ENCODE measurements at regions of chr19 and their contacts with region 1.

Region 1: DNA sequence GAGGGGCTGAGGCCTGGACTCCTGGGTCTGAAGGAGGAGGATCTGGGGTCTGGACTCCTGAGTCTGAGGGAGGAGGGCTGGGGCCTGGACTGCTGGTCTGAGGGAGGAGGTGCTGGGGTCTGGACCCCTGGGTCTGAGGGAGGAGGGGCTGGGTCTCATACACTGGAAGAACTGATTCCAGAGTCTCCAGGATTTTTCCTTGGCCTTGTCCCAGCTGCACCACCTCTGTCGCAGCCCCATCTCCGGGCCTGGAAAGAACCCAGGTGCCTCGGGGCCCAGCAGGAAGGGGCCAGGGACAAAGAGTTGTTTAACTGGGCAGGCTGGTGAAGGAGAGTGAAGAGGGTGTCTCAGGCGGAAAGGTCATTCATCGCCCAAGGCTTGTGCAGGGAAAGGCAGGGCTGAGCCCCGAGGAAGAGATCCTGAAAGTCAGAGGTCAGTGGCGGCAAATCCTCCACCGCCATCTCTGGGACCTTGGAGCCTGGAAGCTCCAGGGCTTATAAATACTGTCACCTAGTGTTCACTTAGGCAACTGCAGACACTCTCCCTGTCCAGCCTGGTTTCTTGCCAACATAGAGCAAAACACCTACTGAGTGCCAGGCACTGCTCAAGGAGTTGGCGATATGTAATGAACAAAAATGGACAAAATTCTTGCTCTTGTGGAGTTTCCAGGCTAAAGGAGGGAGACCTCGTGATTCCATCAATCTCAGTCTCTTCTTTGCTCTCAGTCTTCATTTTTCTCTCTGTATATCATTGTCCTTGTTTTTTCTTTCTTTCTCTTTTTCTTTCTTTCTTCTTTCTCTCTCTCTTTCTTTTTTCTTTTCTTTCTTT is 4.4 kb upstream of the KCNN4 start:
- DNase-seq: peak; percentile 75
- H3K4me3 Mint-ChIP-seq: peak overlapping the region; percentile 66
- H3K27ac Mint-ChIP-seq: peak overlapping the region; percentile 95
- H3K4me1 Mint-ChIP-seq: peaks cover 39% of the 10 kb centered on the region
- H3K27me3 Mint-ChIP-seq: no peaks in the 10 kb centered on the region

Region 2: GRCh38 chr19:43463381-43464136 is 321.6 kb before region 1 on chr19:
- CTCF ChIA-PET with region 1: no interaction called
- intact Hi-C with region 1: loop called (anchors 10 kb)
- DNase-seq: peak; percentile 100
- H3K4me3 Mint-ChIP-seq: peak overlapping the region; percentile 94
- H3K27ac Mint-ChIP-seq: peak overlapping the region; percentile 86
- H3K4me1 Mint-ChIP-seq: peaks cover 37% of the 10 kb centered on the region
- H3K27me3 Mint-ChIP-seq: no peaks in the 10 kb centered on the region

Region 3: GRCh38 chr19:43575156-43575950 is 209.8 kb before region 1 on chr19 and contains the starts of genes PINLYP and XRCC1:
- CTCF ChIA-PET with region 1: no interaction called
- intact Hi-C with region 1: loop called (anchors 2 kb)
- DNase-seq: peak; percentile 99
- H3K4me3 Mint-ChIP-seq: peak within 1 kb of the TSS; percentile 95
- H3K27ac Mint-ChIP-seq: peak within 1 kb of the TSS; percentile 94
- H3K4me1 Mint-ChIP-seq: peaks cover 37% of the 10 kb centered on the region
- H3K27me3 Mint-ChIP-seq: no peaks in the 10 kb centered on the region
- total RNA-seq, gene PINLYP: 3.2 to 3.8 TPM
- total RNA-seq, gene XRCC1: 33.7 to 34.5 TPM

Region 4: DNA sequence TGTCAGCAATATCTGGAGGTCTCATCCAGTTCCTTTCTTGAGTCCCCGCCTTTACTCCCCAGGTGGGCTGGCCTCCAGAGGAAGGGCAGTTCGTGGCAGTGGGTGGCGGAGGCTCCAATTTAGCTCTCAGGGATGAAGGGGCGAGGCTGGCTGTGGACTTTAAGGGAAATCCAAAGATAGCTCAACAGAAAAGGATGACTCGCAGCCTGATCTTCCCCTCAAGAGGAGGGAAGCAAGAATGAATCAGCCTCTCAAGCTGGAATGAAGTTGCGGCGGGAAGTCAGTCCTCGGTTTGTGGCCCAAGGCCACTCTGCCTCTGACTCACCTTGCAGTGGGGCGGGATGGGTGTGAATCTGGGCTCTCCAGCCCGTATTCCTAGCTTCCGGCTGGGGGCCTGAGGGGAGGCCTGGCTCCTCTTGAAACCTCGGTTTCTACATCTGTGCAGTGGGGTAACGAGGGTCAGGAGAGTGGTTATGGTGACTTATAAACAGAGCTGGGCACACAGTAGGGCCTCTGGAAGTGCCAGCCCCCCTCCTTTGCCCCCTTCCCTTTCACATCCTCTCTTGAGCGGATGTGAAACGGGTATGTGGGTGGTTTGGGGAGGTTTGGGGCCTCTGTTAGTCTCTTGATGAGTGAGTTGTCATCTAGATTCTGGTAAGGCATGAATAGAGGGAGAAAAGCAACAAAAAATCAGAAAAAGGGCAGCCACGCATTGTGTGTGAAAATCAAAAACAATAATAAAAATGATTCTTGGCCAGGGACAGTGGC is 19.9 kb before region 1 on chr19:
- CTCF ChIA-PET with region 1: interaction called, 113 read pairs
- intact Hi-C with region 1: loop called (anchors 1 kb)
- DNase-seq: peak; percentile 95
- H3K4me3 Mint-ChIP-seq: peak overlapping the region; percentile 53
- H3K27ac Mint-ChIP-seq: peak overlapping the region; percentile 100
- H3K4me1 Mint-ChIP-seq: peaks cover 80% of the 10 kb centered on the region
- H3K27me3 Mint-ChIP-seq: no peaks in the 10 kb centered on the region

Region 5: DNA sequence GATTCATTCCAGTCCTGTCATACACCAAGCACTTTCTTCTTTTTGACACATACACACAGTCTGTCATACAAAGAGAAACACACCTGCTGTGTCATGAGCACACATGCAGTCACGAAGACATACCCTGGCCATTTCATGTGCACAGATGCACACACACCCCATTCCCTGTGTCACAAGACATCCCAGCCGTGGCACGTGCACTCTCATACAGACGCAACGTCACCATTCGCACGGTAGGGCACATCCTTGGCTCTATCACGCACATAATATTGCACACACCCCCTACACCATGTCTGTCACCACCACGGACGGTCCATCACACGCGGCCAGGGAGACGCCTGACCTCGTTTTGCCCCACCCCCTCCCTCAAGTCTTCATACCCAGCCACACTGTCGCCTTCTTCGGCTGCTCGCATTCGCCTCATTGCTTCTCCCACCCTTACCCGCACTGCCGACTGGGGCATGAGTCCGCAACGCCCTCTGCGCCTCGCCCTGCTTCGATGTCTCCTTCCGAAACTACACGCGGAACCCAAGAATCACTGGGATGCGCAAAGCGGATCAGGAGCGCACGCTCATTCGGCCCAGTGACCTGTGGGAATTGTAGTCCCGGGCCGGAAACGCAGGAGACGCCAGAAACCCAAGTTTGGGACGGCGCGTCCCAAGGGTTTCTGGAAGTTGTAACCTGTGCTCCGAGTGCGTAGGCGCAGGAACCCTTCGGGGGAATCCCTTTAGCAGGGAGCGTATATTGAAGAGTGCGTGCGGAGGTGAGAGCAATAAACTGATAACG is 35.1 kb after region 1 on chr19:
- CTCF ChIA-PET with region 1: no interaction called
- intact Hi-C with region 1: loop called (anchors 2 kb)
- DNase-seq: peak; percentile 77
- H3K4me3 Mint-ChIP-seq: peak overlapping the region; percentile 78
- H3K27ac Mint-ChIP-seq: peak overlapping the region; percentile 61
- H3K4me1 Mint-ChIP-seq: peaks cover 13% of the 10 kb centered on the region
- H3K27me3 Mint-ChIP-seq: peaks cover 17% of the 10 kb centered on the region